Right cardiac atrium (tissue), 5 donors: ENCODE measurements at regions of chr10 and their contacts with region 1.

Region 1: DNA sequence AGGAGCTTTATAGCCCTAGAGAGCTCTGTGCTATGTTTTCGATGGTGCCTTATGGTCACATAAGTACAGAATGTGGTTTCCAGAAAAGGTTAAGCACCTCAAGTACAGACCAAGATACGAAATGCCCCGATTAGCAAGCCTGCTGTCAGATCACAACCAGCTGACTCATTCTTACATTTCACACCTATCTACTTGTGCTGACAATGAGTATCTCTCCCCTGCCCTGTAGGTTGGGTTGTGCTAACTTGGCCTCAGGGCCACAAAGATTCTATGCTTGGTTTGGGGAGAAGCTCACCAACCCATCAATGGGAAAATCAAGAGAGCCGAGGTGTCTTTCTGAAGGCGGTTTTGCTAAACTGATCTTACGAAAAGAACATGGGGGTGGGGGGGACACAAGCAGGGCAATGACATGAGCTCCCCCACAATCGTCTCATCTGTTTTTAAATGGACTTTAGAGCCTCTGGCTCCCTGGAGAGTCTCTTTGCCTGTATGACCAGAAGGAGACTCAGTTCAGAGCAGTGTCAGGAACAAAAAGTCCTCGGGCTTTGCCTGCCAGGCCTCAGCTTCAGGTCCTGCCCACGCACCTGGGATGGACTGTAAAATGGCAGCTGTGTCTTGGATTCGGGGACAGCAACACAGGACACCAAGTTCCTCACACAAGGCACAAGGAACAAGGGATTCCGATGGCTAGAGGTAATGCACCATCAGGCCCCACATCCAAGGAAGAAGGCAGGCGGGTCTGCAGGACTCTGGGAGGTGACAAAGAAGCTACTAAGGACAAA is 55.1 kb downstream of the FAM53B start:
- DNase-seq: peak; percentile 2 to 30 (median 12)
- ATAC-seq: peak; percentile 40 to 44
- H3K4me3 ChIP-seq: no peak overlapping the region
- H3K27ac ChIP-seq: peak overlapping the region; percentile 50
- H3K4me1 ChIP-seq: peaks cover 36% of the 10 kb centered on the region
- H3K27me3 ChIP-seq: no peaks in the 10 kb centered on the region

Region 2: DNA sequence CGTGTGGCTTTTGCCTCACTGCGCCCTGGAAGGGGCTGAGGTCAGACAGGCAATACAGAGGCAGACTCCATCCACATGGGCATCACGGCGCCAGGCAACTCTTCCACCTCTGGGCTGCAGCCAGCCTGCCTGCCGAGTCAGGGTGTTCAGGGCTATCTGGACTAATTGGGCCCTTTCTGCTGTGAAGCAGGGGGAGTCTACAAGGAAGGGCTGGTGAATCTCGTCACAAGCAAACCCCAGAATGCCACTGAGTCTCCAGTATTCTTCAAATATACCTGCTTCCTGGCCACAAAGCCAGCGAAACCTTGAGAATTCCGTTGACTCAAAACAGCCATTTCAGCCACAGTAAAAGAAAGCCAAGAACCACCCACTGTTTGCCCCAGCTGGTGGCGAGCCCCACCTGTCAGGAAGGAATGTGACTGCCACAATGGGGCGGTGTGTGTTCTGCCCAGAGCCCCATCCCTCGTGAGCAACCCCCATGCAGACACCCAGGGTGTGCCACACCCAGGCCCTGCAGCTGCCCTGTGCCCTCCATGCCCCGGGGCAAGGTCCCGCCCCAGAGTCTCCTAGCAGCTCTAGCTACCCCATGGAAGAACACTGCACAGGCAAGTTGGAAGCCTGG is 62.2 kb before region 1 on chr10:
- intact Hi-C with region 1: loop called in 1 of 4 experiments (anchors 5 kb)
- DNase-seq: no peak
- ATAC-seq: no peak
- H3K4me3 ChIP-seq: no peak overlapping the region
- H3K27ac ChIP-seq: peak overlapping the region; percentile 27
- H3K4me1 ChIP-seq: peaks cover 62% of the 10 kb centered on the region
- H3K27me3 ChIP-seq: no peaks in the 10 kb centered on the region

Region 3: GRCh38 chr10:124657806-124658205 is 31.3 kb before region 1 on chr10:
- intact Hi-C with region 1: no loop called
- DNase-seq: peak; percentile 10 to 50 (median 41)
- ATAC-seq: no peak
- H3K4me3 ChIP-seq: no peak overlapping the region
- H3K27ac ChIP-seq: no peak overlapping the region
- H3K4me1 ChIP-seq: peaks cover 31% of the 10 kb centered on the region
- H3K27me3 ChIP-seq: no peaks in the 10 kb centered on the region

Region 4: DNA sequence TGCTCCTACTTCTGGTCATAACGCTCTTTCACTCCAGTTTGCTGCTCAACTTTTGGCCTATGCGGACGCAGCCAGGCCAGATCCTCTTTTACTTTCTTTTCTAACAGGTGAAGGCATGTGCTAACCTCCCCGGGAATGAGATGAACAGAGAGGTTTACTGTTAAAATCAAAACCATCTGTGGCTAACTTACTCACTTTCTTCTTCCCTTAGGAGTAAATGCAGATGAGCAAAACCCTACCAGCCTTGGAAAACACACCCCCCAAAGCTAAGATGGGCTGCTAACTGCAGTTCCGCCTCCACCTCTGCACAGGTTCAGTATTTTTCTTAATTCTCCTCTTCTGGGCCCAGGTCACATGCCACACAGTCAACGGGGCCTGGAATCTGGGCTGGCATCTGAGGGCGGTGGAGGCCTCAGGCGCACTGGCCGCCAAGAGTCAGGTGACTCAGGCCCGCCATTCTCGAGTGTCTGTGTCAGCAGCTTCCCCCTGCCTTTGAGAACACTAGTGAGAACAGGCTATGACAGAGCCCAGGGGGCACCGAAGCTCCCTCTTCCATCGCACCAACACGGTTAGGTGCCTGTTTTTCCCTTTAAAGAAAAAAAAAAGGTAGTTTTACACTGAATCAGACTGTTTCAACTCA is 44.0 kb after region 1 on chr10:
- intact Hi-C with region 1: loop called in 3 of 4 experiments (anchors 10 kb)
- DNase-seq: peak; percentile 66 to 83 (median 80)
- ATAC-seq: peak; percentile 41 to 49
- H3K4me3 ChIP-seq: no peak overlapping the region
- H3K27ac ChIP-seq: peak overlapping the region; percentile 94
- H3K4me1 ChIP-seq: peaks cover 68% of the 10 kb centered on the region
- H3K27me3 ChIP-seq: no peaks in the 10 kb centered on the region